ENCODE measurements at regions of chr6 and their contacts with region 1.

Region 1: GRCh38 chr6:112317041-112317860 is 29.9 kb upstream of the RFPL4B start:
- DNase-seq: no peak
- H3K4me3 Mint-ChIP-seq: no peak overlapping the region
- H3K27ac Mint-ChIP-seq: no peak overlapping the region
- H3K4me1 Mint-ChIP-seq: no peaks in the 10 kb centered on the region
- H3K27me3 Mint-ChIP-seq: peaks cover 27% of the 10 kb centered on the region

Region 2: DNA sequence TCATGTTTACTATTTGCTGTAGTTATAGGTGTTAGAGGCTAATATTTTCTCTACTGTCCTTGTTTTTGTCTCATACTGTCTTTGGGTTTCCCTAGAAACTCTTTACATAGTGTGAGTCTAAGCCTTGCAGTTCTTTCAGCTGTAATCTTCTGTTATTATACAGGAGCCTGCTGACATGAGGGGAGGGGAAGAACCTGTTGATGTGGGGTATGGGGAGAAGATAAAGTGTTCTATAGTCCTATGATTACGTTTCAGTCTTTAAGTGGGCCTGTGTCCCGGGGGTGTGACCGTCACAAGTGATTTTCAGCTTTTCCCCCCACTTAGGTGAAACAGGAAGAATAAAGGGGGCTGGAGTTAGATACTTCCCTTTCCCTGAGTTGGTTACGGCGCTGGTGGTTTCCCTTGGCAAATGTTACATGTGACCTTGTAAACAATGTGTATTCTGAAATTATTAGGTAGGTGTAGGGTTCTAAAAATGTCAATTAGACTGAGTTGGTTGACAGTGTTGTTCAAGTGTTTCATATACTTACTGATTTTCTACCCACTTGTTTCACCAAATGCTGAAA is 875.5 kb before region 1 on chr6:
- intact Hi-C with region 1: loop called (anchors 5 kb)
- DNase-seq: no peak
- H3K4me3 Mint-ChIP-seq: no peak overlapping the region
- H3K27ac Mint-ChIP-seq: no peak overlapping the region
- H3K4me1 Mint-ChIP-seq: peaks cover 8% of the 10 kb centered on the region
- H3K27me3 Mint-ChIP-seq: no peaks in the 10 kb centered on the region

Region 3: DNA sequence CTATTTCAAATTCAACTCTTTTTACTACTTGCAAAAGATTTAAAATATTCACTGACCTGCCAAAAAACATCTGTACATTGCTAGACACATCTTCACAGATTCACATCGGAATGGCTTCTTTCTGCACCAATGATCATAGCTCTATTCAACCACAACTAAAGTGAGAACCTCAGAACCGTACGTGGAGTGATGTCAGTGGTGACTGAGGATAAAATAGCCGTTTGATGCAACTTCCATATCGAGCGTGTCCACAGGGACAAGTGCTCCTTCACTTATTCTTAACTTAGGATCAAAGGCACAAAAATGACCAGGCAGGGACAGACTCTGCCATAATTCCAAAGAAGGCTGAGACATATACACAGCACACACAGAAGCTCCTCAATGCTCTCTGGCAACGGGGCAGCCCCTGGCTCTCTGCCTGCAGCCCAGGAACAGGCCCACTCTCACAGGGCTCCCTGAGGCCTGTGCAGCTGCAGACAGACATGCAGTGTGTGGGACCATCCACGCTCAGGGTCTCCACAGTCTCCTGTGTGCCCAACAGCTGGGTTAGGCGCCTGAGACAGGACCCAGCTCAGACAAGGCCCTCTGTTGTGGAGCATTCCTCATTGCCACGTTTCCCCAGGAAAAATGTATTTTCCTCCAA is 466.8 kb before region 1 on chr6:
- intact Hi-C with region 1: no loop called
- DNase-seq: no peak
- H3K4me3 Mint-ChIP-seq: peak overlapping the region; percentile 51
- H3K27ac Mint-ChIP-seq: peak overlapping the region; percentile 73
- H3K4me1 Mint-ChIP-seq: peaks cover 79% of the 10 kb centered on the region
- H3K27me3 Mint-ChIP-seq: no peaks in the 10 kb centered on the region